GM10248 (cell line): ENCODE measurements at regions of chr20 and their contacts with region 1.

Region 1: GRCh38 chr20:48711693-48712456 is 115.9 kb downstream of the PREX1 start:
- DNase-seq: no peak
- CTCF ChIP-seq: no peak

Region 2: DNA sequence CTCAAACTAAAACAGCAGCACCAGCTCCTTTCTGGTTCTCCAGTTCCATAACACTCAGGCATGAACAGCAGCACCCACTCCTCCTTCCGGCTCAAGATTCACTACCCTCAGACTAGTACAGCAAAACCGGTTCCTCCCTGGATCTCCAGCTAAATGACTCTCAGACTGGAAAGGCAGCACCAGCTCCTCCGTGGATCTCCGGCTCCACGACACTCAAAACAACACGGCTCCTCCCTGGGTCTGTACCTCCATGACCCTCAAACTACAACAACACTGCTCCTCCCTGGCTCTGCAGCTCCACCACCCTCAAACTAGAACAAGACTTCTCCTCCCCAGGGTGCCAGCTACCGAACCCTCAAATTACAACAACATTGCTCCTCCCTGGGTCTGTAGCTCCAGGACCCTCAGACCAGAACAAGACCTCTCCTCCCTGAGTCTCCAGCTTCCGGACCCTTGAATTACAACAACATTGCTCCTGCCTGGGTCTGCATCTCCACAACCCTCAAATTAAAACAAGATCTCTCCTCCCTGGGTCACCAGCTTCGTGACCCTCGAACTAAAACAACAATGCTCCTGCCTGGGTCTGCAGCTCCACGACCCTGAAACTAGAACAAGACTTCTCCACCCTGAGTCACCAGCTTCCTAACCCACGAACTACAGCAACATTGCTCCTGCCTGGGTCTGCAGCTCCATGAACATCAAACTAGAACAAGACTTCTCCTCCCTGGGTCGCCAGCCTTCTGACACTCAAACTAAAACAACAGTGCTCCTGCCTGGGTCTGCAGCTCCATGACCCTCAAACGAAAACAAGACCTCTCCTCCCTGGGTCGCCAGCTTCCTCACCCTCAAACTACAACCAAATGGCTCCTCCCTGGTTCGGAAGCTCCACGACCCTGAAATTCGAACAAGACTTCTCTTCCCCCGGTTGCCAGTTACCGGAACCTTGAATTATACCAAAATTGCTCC is 208.7 kb before region 1 on chr20:
- CTCF ChIA-PET with region 1: no interaction called
- POLR2A ChIA-PET with region 1: no interaction called
- DNase-seq: no peak
- CTCF ChIP-seq: no peak

Region 3: GRCh38 chr20:48682529-48683251 is 29.2 kb before region 1 on chr20:
- CTCF ChIA-PET with region 1: no interaction called
- POLR2A ChIA-PET with region 1: no interaction called
- DNase-seq: no peak
- CTCF ChIP-seq: no peak

Region 4: GRCh38 chr20:48697879-48698724 is 13.8 kb before region 1 on chr20:
- CTCF ChIA-PET with region 1: interaction called, 12 read pairs
- POLR2A ChIA-PET with region 1: no interaction called
- DNase-seq: no peak
- CTCF ChIP-seq: no peak

Region 5: DNA sequence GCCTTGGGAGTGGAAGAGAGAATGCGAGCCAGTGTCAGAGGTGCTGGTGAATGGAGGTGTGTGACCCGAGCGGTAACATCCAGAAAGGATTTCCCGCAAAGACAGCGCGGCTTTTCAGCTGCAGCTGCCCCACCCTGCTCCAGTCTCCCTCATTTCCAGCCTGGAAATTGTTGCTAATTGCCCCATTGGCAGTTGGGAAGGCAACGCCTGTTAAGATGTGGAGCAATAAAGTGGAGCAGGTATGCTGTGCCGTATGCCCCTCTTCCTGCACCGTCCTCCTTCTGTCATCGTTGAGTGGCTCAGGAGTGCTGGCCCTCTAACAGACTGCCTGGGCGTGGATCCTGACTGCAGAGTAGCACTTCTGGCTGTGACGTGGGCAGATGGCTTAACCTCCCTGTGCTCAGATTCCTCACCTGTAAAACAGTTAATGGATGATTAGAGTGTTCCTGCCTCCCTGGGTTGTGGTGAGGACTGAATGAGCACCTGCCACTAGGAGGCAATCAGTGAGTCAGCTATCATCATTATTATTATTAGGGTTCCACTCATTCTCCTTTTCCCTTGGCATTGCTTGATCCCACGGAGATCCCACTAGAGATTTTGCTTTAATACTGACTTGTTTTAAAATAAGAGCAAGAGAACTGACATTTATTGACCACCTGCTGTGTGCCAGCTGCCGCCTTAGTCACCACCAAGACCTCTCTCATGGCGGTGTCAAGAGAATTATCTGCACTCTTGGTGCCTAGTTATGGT is 221.3 kb after region 1 on chr20:
- CTCF ChIA-PET with region 1: no interaction called
- POLR2A ChIA-PET with region 1: no interaction called
- DNase-seq: no peak
- CTCF ChIP-seq: peak; percentile 2